ENCODE measurements at regions of chr2 and their contacts with region 1.

Region 1: DNA sequence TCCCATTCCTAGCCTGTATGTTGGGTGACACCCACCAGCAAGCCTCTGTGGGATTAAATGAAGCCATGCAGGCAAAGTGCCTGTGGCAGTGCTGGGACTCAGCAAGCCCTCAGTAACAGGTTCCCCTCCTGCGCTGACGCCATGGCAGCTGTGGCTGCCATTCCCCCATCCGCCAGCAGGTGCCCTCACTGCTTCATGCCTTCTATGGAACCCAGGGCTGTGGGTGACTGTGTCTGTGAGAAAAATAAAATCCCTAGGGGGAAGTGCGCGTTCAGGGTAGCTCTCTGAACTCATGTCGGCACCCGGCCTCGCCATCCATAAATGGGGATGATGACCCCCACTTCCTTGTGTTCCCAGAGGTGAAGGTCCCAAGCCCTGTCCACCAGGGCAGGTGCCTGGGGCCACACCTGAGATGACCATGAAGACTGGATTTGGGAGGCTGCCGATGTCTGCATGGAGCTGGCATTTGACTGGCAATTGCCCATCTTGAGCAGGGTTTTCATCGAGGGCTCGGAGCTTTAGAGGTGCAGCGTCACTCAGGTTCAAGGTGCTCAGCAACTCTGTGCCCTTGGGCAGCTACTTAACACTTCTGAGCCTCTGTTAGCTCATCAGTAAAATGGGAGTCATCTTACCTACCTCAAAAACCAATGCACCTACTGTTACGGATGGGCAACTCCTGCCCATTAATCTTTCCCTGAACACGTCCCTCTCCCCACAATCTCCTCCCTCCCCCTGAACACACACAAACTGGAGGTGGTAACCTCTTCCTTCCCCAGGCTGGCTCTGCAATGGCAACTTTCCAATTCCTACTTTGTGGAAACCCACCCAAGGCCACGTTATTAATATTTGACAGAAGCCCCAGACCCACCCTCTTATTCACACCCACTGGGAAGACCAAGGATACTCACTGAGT is 2.9 kb upstream of the MAL start:
- DNase-seq: peak; percentile 94
- ATAC-seq: peak; percentile 79
- H3K4me3 Mint-ChIP-seq: peak overlapping the region; percentile 29
- H3K27ac Mint-ChIP-seq: peak overlapping the region; percentile 44
- H3K4me1 Mint-ChIP-seq: peaks cover 43% of the 10 kb centered on the region
- H3K27me3 Mint-ChIP-seq: no peaks in the 10 kb centered on the region
- CTCF ChIP-seq: peak; percentile 86

Region 2: DNA sequence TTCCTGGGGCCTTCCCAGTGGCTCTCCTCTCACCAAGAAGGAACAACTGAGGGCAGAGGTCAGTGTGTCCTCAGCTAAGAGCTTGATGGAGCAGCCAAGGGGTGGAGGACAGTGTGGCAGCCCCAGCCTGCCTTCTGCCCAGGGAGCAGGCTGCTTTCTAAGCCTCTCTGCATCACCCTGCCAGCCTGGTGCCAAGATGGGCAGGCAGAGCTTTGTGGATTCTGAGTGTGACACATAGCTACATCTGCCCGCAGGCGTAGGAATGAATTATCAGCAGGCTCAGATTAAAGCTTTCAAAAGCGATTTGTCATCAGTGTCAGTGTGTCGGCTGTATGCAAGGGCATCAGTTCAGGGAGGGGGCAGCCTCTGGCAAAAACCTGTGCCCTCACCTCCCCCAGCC is 11.7 kb after region 1 on chr2:
- CTCF ChIA-PET with region 1: interaction called, 15 read pairs
- POLR2A ChIA-PET with region 1: interaction called, 6 read pairs
- intact Hi-C with region 1: no loop called
- DNase-seq: no peak
- ATAC-seq: peak; percentile 65
- H3K4me3 Mint-ChIP-seq: no peak overlapping the region
- H3K27ac Mint-ChIP-seq: no peak overlapping the region
- H3K4me1 Mint-ChIP-seq: peaks cover 76% of the 10 kb centered on the region
- H3K27me3 Mint-ChIP-seq: no peaks in the 10 kb centered on the region
- CTCF ChIP-seq: no peak

Region 3: GRCh38 chr2:95053543-95053942 is 31.0 kb after region 1 on chr2:
- CTCF ChIA-PET with region 1: interaction called, 142 read pairs
- POLR2A ChIA-PET with region 1: interaction called, 11 read pairs
- intact Hi-C with region 1: loop called (anchors 2 kb)
- DNase-seq: peak; percentile 59
- ATAC-seq: no peak
- H3K4me3 Mint-ChIP-seq: no peak overlapping the region
- H3K27ac Mint-ChIP-seq: peak overlapping the region; percentile 85
- H3K4me1 Mint-ChIP-seq: peaks cover 70% of the 10 kb centered on the region
- H3K27me3 Mint-ChIP-seq: no peaks in the 10 kb centered on the region
- CTCF ChIP-seq: peak; percentile 11

Region 4: DNA sequence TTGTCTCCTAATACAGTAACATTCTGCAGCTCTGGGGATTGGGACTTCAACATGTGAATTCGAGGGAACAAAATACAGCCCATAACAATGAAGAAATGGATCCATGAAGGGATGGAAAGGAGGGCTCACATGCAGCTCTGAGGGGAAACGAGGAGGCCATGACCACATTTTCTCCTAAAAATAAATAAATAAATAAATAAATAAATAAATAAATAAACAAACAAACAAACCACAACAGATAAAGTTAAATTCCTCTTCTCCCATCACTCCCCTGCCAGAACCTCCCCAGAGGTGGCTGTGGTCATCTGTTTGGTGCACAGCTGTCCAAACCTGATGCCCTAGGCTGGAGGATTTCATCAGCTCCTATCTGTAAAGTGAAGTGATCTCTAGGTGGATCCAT is 45.7 kb after region 1 on chr2:
- CTCF ChIA-PET with region 1: interaction called, 375 read pairs
- POLR2A ChIA-PET with region 1: interaction called, 104 read pairs
- intact Hi-C with region 1: no loop called
- DNase-seq: no peak
- ATAC-seq: no peak
- H3K4me3 Mint-ChIP-seq: no peak overlapping the region
- H3K27ac Mint-ChIP-seq: no peak overlapping the region
- H3K4me1 Mint-ChIP-seq: peaks cover 14% of the 10 kb centered on the region
- H3K27me3 Mint-ChIP-seq: no peaks in the 10 kb centered on the region
- CTCF ChIP-seq: no peak

Region 5: GRCh38 chr2:95082477-95082876 is 59.9 kb after region 1 on chr2:
- CTCF ChIA-PET with region 1: interaction called, 375 read pairs
- POLR2A ChIA-PET with region 1: interaction called, 104 read pairs
- intact Hi-C with region 1: loop called (anchors 2 kb)
- DNase-seq: no peak
- ATAC-seq: no peak
- H3K4me3 Mint-ChIP-seq: no peak overlapping the region
- H3K27ac Mint-ChIP-seq: no peak overlapping the region
- H3K4me1 Mint-ChIP-seq: peaks cover 22% of the 10 kb centered on the region
- H3K27me3 Mint-ChIP-seq: no peaks in the 10 kb centered on the region
- CTCF ChIP-seq: no peak

Region 6: GRCh38 chr2:95121407-95122196 is 99.0 kb after region 1 on chr2 and contains the start of gene MRPS5:
- CTCF ChIA-PET with region 1: interaction called, 143 read pairs
- POLR2A ChIA-PET with region 1: interaction called, 3 read pairs
- intact Hi-C with region 1: no loop called
- DNase-seq: peak; percentile 90
- ATAC-seq: peak; percentile 97
- H3K4me3 Mint-ChIP-seq: peak within 1 kb of the TSS; percentile 82
- H3K27ac Mint-ChIP-seq: peak within 1 kb of the TSS; percentile 93
- H3K4me1 Mint-ChIP-seq: peaks cover 37% of the 10 kb centered on the region
- H3K27me3 Mint-ChIP-seq: no peaks in the 10 kb centered on the region
- CTCF ChIP-seq: no peak
- total RNA-seq, gene MRPS5: 93.0 to 96.1 TPM

Region 7: DNA sequence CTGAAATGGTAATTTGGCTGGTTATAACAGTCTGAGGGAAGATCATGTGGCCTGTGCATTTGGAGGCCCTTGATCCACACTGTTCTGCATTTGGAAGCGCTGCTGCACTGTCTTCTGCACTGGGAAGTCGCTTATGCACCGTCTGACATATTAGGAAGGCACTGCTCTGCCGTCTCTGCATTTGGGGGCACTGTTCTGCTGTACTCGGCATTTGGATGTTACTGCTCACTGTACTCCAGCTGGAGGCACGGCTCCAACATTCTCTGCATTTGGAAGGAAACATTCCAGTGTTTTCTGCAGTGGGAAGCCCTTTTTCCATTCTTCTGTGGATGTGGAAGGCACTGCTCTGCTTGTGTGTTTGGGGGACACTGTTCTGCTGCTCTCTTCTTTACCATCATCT is 242.1 kb after region 1 on chr2:
- CTCF ChIA-PET with region 1: no interaction called
- POLR2A ChIA-PET with region 1: no interaction called
- intact Hi-C with region 1: no loop called
- DNase-seq: no peak
- ATAC-seq: no peak
- H3K4me3 Mint-ChIP-seq: no peak overlapping the region
- H3K27ac Mint-ChIP-seq: no peak overlapping the region
- H3K4me1 Mint-ChIP-seq: no peaks in the 10 kb centered on the region
- H3K27me3 Mint-ChIP-seq: peaks cover 1% of the 10 kb centered on the region
- CTCF ChIP-seq: no peak

Region 8: GRCh38 chr2:96116879-96117697 is 1094.5 kb after region 1 on chr2:
- CTCF ChIA-PET with region 1: no interaction called
- POLR2A ChIA-PET with region 1: no interaction called
- intact Hi-C with region 1: no loop called
- DNase-seq: peak; percentile 64
- ATAC-seq: peak; percentile 82
- H3K4me3 Mint-ChIP-seq: peak overlapping the region; percentile 64
- H3K27ac Mint-ChIP-seq: no peak overlapping the region
- H3K4me1 Mint-ChIP-seq: peaks cover 22% of the 10 kb centered on the region
- H3K27me3 Mint-ChIP-seq: peaks cover 32% of the 10 kb centered on the region
- CTCF ChIP-seq: peak; percentile 92

Measured in activated CD8-positive, alpha-beta T cell treated with anti-CD3 and anti-CD28 coated beads for 36 hours (primary cell).